PC-3 (cell line): ENCODE measurements at regions of chr2 and their contacts with region 1.

Region 1: GRCh38 chr2:40844353-40845277 is 392.7 kb upstream of the SLC8A1 start:
- DNase-seq: peak; percentile 92
- ATAC-seq: peak; percentile 99
- H3K4me3 ChIP-seq: peak overlapping the region; percentile 68
- H3K27ac ChIP-seq: no peak overlapping the region
- H3K4me1 ChIP-seq: peaks cover 7% of the 10 kb centered on the region
- H3K27me3 ChIP-seq: no peaks in the 10 kb centered on the region
- CTCF ChIP-seq: peak; percentile 82

Region 2: DNA sequence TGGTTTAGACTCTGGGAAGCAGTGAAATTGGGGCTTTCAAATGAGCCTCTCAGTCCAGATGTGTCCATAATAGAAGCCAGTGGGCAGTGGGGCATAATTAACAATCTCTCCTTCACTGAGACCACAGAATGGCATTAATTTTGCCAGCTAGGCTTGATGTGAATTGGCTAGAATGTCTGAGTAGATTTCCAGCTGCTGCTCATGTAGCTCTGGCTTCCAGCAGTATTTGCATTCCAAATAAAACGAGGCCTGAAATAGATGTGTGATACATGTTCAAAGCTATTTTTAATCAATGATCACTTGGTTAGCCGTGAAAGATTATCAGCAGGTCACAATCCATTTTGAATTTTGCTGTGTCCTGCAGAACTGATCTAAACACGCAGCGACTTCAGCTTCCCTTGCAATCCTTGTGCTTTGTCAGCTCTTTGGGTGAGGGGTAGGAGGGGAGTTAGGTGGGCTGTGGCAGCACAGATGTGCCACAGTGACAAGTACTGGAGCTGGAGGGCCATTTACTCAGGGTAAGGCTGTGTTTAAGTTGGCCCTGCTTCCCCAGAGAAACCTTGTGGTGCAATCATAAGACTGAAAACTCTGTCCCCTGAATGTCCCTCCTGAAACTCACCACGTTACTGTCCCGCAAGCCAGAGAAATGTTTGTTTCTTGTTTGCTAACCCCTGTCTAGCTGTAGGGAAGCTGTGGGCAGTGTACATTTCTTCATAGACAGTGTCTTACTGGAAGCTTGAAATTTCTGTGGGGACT is 1235.8 kb before region 1 on chr2:
- CTCF ChIA-PET with region 1: no interaction called
- POLR2A ChIA-PET with region 1: no interaction called
- intact Hi-C with region 1: no loop called
- DNase-seq: no peak
- ATAC-seq: no peak
- H3K4me3 ChIP-seq: no peak overlapping the region
- H3K27ac ChIP-seq: no peak overlapping the region
- H3K4me1 ChIP-seq: no peaks in the 10 kb centered on the region
- H3K27me3 ChIP-seq: no peaks in the 10 kb centered on the region
- CTCF ChIP-seq: no peak

Region 3: GRCh38 chr2:41142478-41142877 is 297.9 kb after region 1 on chr2:
- CTCF ChIA-PET with region 1: no interaction called
- POLR2A ChIA-PET with region 1: no interaction called
- intact Hi-C with region 1: loop called (anchors 10 kb)
- DNase-seq: no peak
- ATAC-seq: peak; percentile 5
- H3K4me3 ChIP-seq: no peak overlapping the region
- H3K27ac ChIP-seq: peak overlapping the region; percentile 55
- H3K4me1 ChIP-seq: peaks cover 17% of the 10 kb centered on the region
- H3K27me3 ChIP-seq: no peaks in the 10 kb centered on the region
- CTCF ChIP-seq: no peak

Region 4: DNA sequence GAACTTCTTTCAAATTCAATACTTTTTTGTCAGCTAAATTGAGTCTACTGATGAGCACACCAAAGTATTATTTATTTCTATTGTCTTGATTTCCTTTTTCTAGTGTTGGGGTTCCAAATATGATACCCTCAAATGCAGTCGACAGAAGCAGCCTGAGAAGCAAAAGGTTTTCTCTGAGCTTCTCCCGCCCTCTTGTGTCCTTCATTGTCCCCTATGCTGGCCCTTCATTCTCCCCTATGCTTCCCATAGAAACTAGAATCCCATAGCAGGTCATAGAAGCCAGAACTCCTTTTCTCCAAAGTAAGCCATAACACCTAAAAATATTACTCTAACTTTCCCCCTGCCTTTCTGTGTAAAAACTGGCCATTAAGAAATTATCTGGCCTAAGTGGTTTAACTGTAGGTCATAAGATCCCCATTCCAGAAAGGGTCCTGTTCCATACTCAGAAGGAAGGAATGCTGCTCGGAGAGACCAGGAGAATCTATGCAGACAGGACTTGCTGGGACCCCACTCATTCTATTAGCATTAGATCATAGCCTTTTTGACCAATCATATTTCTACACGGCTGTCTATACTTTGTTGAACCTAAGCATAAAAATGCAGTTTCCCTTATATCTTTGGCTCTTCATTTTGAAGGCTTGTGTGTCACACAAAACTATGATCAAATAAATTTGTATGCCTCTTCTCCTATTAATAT is 438.6 kb after region 1 on chr2:
- CTCF ChIA-PET with region 1: no interaction called
- POLR2A ChIA-PET with region 1: no interaction called
- intact Hi-C with region 1: loop called (anchors 1 kb)
- DNase-seq: peak; percentile 12
- ATAC-seq: no peak
- H3K4me3 ChIP-seq: no peak overlapping the region
- H3K27ac ChIP-seq: no peak overlapping the region
- H3K4me1 ChIP-seq: no peaks in the 10 kb centered on the region
- H3K27me3 ChIP-seq: no peaks in the 10 kb centered on the region
- CTCF ChIP-seq: peak; percentile 41; the same call in 1 of the 2 replicates